HEK293 (cell line): ENCODE measurements at regions of chr12 and their contacts with region 1.

Region 1: DNA sequence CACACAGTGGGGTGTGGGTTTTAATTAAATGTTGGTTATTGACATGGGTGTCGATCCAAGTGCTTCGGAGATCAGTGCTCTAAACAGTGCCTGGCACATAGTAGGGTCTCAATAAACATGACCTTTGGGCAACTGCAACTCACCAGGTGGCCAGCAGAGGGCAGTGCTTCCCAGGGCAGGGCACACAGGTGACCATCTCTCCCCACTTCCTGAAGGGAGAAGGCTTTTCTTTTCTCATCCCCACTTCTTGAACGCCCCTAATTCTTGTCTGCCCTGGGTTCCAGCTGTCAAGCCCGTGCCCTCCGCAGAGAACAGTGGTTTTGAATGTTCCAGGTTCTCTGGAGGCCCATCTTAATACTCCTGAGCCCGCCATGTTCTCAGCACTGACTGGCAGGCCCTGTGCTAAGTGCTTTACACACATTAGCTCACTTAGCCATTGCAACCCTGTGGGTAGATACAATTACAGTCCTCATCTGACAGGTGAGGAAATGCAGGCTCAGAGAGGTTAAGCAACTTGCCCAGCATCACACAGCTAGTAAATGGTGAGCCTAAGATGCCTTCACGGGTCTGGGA is 16.3 kb downstream of the RAPGEF3 start:
- H3K4me3 ChIP-seq: no peak overlapping the region
- H3K27ac ChIP-seq: no peak overlapping the region
- H3K4me1 ChIP-seq: no peaks in the 10 kb centered on the region
- CTCF ChIP-seq: peak; percentile 82

Region 2: DNA sequence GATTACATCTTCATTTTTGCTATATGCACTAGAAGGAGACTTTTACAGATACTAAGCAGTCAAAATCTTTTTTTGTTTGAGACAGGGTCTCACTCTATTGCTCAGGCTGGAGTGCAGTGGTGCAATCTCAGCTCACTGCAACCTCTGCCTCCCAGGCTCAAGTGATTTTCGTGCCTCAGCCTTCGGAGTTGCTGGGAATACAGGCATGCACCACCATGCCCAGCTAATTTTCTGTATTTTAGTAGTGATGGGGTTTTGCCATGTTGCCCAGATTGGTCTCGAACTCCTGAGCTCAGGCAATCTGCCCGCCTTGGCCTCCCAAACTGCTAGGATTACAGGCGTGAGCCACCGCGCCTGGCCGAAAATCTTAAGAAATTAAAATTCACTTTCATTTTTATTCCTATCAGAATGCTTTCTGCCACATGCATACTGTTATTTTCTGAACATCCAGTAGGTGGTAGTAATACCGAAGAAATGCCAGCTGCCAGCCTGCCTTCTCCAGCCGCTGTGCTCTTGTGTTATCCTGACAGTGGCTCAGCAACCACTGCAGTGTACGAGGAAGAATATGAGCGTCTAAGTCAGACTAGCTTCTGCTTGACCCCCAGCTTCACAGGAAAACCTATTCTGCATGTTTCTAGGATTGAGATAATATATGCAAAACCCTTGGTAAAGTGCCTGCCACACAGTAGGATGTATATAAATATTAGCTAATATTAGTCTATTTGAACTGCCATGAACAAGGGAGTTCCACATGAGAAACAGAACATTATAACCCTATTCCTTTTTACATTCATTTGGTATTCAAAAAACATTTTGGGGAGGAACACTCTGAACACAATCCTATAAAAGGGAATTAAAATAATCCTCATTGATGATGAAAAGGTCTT is 90.7 kb before region 1 on chr12:
- CTCF ChIA-PET with region 1: interaction called, 10 read pairs
- POLR2A ChIA-PET with region 1: no interaction called
- H3K4me3 ChIP-seq: no peak overlapping the region
- H3K27ac ChIP-seq: no peak overlapping the region
- H3K4me1 ChIP-seq: no peaks in the 10 kb centered on the region; the same call in 1 of the 2 replicates
- CTCF ChIP-seq: no peak

Region 3: DNA sequence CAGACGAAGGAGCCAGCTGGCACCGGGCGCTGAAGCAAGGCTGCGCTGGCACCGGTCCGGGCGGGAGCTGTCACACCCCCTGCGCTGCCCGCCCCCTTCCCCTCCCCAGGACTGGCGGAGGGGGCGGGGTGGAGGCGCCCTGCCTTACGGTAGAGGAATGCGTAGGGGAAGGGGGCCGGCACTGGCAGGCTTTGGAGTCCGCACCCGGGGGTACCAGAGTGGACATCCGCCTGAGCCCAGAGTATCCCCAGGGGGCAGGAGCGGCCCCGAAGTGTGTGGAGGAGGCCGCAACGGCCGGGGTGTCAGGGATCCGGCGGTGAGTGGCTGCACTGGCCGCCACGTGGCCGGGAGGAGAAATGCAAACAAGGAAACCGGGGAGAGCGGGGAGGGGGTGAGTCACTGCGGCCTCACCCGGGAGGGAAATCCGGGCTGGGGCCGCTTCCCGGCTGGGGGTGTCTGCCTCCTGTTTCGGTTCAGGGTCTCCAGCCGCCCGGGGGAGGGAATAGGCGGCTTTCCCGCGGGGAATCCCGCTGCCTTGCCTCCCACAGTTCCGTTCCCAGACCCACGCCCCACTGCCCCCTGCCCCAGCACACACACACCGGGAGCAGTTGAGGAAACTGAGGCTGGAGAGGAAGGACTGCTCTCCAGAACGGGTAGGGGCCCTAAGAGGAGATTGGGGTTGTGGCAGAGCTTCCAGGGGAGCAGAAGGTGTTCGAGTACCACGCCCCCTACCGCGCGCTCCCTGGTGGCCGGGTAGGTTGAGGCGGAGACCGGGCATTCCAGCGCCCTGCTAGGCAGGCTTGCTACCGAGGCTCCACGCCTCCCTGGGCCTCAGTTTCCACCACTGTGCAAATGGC is 16.7 kb after region 1 on chr12 and contains the start of gene RAPGEF3:
- CTCF ChIA-PET with region 1: interaction called, 241 read pairs
- POLR2A ChIA-PET with region 1: interaction called, 3 read pairs
- H3K4me3 ChIP-seq: peak within 1 kb of the TSS; percentile 46
- H3K27ac ChIP-seq: peak within 1 kb of the TSS; percentile 11; the same call in 1 of the 2 replicates
- H3K4me1 ChIP-seq: peaks cover 5% of the 10 kb centered on the region; the same call in 1 of the 2 replicates
- CTCF ChIP-seq: peak; percentile 71

Region 4: GRCh38 chr12:47779301-47779942 is 37.1 kb after region 1 on chr12:
- CTCF ChIA-PET with region 1: interaction called, 784 read pairs
- POLR2A ChIA-PET with region 1: interaction called, 4 read pairs
- H3K4me3 ChIP-seq: no peak overlapping the region
- H3K27ac ChIP-seq: no peak overlapping the region
- H3K4me1 ChIP-seq: no peaks in the 10 kb centered on the region; the same call in 1 of the 2 replicates
- CTCF ChIP-seq: peak; percentile 90

Region 5: DNA sequence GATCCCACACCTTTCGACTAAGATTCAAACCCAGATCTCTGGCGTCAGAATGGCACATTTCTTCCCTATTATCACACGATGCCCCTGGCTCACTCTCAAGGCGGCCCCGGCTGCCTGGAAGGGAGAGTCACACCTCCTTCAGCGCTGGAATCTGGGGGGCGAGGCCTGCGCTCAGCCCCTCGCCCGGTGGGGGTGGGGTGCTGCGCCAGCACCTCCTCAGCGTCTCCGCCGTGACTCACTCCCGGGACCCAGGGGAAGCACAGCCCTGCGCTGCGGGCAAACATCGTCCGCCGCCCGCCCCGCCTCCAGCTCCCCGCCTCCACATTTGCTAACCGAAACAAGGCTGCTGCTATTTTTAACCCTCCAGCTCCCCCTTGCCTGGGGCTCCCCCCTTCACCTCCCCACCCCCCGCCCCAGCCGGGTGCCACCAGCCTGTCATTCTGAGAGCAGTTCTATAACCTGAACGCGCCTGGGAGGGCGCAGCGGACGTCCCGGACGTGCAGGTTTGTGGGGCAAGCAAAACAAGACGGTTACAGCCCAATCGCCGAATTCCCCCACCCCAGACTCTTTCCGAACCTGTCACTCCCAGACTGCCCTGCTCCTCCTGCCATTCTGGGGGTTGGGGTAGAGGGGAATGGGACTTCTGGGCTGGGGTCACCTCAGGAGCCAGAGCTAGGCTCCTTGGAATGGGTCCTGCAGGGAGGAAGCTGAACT is 70.6 kb after region 1 on chr12:
- CTCF ChIA-PET with region 1: interaction called, 17 read pairs
- POLR2A ChIA-PET with region 1: no interaction called
- H3K4me3 ChIP-seq: peak overlapping the region; percentile 28
- H3K27ac ChIP-seq: peak overlapping the region; percentile 66
- H3K4me1 ChIP-seq: peaks cover 27% of the 10 kb centered on the region
- CTCF ChIP-seq: no peak

Region 6: DNA sequence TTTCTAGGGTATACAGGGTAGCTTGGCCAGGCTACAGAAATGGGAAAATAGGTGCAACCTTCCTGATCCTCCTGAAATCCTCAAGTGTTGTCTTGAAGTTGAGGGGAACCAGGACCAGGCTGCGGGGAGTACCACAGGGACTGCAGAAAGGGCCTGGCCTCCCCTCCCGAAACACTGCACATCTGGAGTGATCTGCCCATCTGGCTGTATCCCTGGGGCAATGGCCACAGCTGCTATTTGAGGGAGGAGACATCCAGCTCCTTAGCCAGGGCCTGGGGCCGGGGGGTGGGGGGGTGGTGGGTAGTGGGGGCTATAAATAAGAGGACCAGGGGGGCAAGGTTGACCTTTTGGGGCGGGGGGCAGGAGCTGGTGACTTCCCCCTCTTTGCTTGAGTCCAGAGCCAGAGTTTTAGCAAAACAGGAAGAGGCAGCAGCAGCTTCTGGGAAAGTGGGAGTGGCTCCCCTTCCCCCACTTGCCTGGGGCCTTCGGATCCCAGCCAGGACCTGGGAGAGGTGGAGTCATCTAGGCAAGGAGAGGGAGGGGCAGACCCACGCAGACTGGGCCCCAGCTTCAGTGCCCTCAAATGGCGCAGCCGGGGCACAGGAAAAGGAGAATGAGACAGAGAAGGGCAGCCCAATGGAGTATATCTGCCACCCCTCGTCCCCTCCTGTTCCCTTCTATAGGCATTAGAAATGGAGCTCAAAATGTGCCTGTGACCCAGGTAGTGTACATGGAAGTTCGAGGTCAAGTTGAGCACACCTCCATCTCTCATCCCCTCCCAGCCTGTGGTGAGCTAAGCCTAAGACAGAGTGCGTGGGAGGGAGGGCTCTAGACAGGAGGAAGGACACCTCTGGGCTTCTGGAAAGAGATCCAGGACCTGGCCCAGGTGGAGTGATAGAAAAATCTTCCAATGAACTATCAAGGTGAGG is 86.5 kb after region 1 on chr12:
- CTCF ChIA-PET with region 1: interaction called, 264 read pairs
- POLR2A ChIA-PET with region 1: no interaction called
- H3K4me3 ChIP-seq: peak overlapping the region; percentile 6
- H3K27ac ChIP-seq: peak overlapping the region; percentile 48; the same call in 1 of the 2 replicates
- H3K4me1 ChIP-seq: peaks cover 3% of the 10 kb centered on the region
- CTCF ChIP-seq: no peak